Activated naive CD8-positive, alpha-beta T cell treated with anti-CD3 and anti-CD28 coated beads, Interleukin-2, amount 10 ng/mL, durations not matched to agents 7 days and 5 days (primary cell): ENCODE measurements at regions of chr19 and their contacts with region 1.

Region 1: GRCh38 chr19:38618590-38619360 is at the start of gene EIF3K:
- DNase-seq: peak; percentile 99
- ATAC-seq: peak; percentile 65
- H3K4me3 Mint-ChIP-seq: peak within 1 kb of the TSS; percentile 93
- H3K27ac Mint-ChIP-seq: peak within 1 kb of the TSS; percentile 96
- H3K4me1 Mint-ChIP-seq: peaks cover 36% of the 10 kb centered on the region
- H3K27me3 Mint-ChIP-seq: no peaks in the 10 kb centered on the region
- total RNA-seq, gene EIF3K: 307 to 308 TPM

Region 2: GRCh38 chr19:38606131-38606530 is 12.6 kb before region 1 on chr19:
- POLR2A ChIA-PET with region 1: interaction called, 13 read pairs
- DNase-seq: no peak
- ATAC-seq: no peak
- H3K4me3 Mint-ChIP-seq: no peak overlapping the region
- H3K27ac Mint-ChIP-seq: no peak overlapping the region
- H3K4me1 Mint-ChIP-seq: peaks cover 2% of the 10 kb centered on the region
- H3K27me3 Mint-ChIP-seq: no peaks in the 10 kb centered on the region

Region 3: DNA sequence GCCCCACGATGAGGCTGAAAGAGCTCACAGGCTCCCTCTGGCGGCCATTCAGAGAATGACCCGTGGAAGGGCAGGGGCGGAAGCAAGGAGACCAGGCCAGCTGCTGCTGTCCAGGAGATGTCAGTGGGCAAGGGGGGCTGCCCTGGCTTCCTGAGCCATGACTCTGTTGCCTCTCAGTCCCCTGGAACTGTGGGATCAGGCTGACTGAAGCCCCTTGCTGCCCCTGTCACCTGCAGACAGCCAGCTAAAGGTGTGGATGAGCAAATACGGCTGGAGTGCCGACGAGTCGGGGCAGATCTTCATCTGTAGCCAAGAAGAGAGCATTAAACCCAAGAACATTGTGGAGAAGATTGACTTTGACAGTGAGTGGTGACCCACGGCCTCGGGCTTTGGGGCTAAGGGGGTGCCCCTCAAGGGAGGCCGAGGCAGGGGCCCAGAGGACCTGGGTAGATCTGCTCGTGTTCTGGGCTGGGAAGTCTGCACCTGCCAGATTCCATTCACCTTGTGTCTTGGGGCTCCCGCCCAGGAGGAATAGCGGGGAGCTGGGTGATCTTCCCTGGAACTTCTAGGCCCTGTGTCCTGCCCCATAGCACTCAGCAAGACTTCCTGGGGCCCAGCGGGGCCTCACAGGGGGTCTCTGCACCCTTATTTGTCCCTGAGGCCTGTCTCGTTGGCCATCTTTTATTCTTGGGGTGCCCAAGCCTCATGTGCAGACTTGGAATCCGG is 16.1 kb after region 1 on chr19:
- POLR2A ChIA-PET with region 1: interaction called, 12 read pairs
- DNase-seq: peak; percentile 82
- ATAC-seq: no peak
- H3K4me3 Mint-ChIP-seq: no peak overlapping the region
- H3K27ac Mint-ChIP-seq: peak overlapping the region; percentile 83
- H3K4me1 Mint-ChIP-seq: peaks cover 24% of the 10 kb centered on the region
- H3K27me3 Mint-ChIP-seq: no peaks in the 10 kb centered on the region

Region 4: DNA sequence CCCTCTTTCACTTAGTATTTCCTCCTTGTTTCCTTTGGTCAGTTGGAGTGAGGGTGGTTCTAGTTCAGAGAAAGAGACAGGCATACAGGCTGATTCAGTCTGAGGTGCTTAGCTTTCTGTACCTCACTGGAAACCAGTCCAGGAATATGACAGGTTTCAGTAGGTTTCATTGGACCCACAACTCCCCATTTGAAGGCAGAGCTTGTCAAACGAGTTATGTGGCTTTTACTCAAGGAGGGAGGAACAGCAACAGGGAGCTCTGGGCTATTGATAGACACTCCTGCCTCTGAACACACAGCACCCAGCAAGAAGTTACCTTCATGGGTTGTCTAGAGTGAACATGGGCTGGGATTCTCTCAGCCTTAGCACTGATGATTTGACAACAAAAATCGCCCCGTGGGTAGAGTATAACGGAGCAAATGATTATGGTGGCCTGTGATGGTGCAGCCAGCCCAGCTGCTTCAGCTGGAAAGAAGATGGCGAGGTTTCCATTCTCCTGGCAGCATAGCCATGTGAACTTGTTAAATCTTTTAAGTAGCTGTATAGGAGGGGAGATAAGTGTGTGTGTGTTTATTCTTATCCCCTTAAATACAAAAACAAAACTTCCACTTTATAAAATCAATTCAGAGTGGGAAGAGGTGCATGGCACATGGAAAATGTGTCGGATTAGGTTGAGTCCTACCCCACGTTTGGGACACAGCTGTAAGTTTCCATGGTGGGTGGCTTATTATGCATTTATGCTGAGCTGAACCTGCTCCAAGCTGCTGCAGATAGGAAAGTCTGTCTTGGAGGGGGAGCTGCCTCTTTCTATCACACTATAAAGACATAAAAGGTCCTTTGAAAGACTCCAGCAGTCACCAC is 43.5 kb after region 1 on chr19:
- POLR2A ChIA-PET with region 1: no interaction called
- DNase-seq: no peak
- ATAC-seq: no peak
- H3K4me3 Mint-ChIP-seq: no peak overlapping the region
- H3K27ac Mint-ChIP-seq: no peak overlapping the region
- H3K4me1 Mint-ChIP-seq: peaks cover 61% of the 10 kb centered on the region
- H3K27me3 Mint-ChIP-seq: no peaks in the 10 kb centered on the region